CD4-positive, alpha-beta memory T cell (primary cell): ENCODE measurements at regions of chr10 and their contacts with region 1.

Region 1: DNA sequence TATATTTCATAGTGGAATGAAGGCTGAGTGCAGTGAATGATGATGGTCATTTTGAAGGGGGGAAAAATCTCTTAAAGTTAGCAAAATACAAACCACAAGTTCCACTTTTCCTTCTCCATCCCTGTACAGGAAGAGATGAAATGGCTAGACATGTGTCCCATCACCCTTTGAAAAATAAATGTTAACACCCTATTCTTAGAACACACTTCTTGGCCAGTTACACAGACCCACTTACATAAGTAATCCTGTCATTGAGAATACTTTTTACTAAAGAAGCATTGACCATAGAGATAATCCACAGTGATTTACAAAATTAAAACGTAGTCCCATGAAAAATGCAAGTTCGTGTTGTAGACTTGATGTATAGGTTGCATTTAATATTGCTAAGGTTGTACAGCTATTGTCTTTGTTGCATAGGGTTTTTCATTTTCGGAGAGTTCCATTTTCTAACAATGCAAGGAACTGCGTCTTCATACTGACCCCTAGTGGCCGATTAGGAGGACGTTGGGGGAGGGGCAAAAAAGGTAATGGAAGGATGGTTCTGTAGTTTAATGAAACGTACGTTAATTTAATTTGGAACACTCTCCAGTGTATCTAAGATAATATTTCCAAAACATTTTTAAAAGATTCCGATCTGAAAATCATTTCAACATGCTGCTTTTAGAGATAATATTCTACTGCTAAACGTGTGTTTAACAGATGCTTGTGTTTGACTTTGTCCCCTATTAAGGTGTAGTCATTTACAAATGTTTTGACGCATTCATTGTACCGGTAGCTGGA is 60.9 kb downstream of the ARMC3 start:
- DNase-seq: peak; percentile 71 to 79 (median 77)
- H3K4me3 ChIP-seq: no peak overlapping the region
- H3K4me3 Mint-ChIP-seq: no peak overlapping the region
- H3K27ac ChIP-seq: no peak overlapping the region
- H3K27ac Mint-ChIP-seq: peak overlapping the region in 3 of 7 donors; percentile 6 to 68 (median 43)
- H3K4me1 ChIP-seq: peaks cover 13% of the 10 kb centered on the region
- H3K4me1 Mint-ChIP-seq: peaks cover 4 to 10% (median 9%) of the 10 kb centered on the region in 4 donors
- H3K27me3 ChIP-seq: no peaks in the 10 kb centered on the region
- H3K27me3 Mint-ChIP-seq: peaks cover 4 to 5% of the 10 kb centered on the region in 2 donors

Region 2: DNA sequence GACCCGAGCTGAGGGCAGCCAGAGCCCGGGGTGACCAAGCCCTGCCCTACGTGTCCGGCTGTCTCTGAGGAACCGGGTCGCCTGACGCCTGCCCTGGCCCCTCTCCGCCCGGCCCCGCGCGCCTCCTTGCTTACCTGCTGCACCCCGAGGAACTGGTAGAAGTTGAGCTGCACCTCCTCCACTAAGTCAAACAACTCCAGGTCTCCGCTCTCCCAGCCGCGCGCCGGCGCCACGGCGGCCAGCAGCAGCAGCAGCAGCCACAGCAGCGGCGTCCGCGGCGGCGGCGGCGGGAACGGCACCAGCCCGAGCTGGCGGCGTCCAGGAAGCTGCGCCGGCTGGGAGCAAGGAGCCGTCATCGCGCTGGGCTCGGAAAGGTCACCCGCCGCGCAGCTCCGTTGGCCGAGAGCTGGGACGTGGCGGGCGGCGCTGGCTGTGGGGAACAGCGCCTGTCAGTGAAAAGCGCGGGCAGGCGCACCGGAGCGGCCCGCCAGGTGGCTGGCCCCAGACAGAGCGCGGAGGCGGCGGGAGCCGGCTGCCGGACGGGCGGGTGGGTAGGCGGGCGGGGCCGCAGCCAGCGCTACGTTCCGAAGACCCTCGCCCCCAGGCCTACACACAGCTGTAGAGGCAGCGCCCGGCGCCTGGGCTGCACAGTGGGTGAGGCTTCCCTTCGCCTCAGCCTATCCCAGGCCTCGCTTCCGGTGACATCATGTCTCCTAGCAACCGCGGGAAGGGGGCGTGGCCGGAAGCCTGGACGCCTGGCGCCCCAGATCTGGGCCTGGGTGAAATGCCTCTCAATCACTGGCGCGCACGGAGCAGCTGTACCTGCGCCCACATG is 985.5 kb before region 1 on chr10 and contains the start of gene DNAJC1:
- CTCF ChIA-PET with region 1: interaction called, 23 read pairs
- POLR2A ChIA-PET with region 1: no interaction called
- intact Hi-C with region 1: no loop called
- DNase-seq: peak; percentile 96 to 98 (median 96)
- H3K4me3 ChIP-seq: peak within 1 kb of the TSS; percentile 62 to 89
- H3K4me3 Mint-ChIP-seq: peak within 1 kb of the TSS; percentile 94 to 100 (median 98)
- H3K27ac ChIP-seq: peak within 1 kb of the TSS; percentile 84
- H3K27ac Mint-ChIP-seq: peak within 1 kb of the TSS; percentile 91 to 99 (median 97)
- H3K4me1 ChIP-seq: peaks cover 26% of the 10 kb centered on the region
- H3K4me1 Mint-ChIP-seq: peaks cover 23 to 45% (median 34%) of the 10 kb centered on the region in 4 donors
- H3K27me3 ChIP-seq: peaks cover 3% of the 10 kb centered on the region
- H3K27me3 Mint-ChIP-seq: peaks cover 0 to 4% of the 10 kb centered on the region in 2 donors
- total RNA-seq, gene DNAJC1: 15.0 to 16.7 TPM

Region 3: DNA sequence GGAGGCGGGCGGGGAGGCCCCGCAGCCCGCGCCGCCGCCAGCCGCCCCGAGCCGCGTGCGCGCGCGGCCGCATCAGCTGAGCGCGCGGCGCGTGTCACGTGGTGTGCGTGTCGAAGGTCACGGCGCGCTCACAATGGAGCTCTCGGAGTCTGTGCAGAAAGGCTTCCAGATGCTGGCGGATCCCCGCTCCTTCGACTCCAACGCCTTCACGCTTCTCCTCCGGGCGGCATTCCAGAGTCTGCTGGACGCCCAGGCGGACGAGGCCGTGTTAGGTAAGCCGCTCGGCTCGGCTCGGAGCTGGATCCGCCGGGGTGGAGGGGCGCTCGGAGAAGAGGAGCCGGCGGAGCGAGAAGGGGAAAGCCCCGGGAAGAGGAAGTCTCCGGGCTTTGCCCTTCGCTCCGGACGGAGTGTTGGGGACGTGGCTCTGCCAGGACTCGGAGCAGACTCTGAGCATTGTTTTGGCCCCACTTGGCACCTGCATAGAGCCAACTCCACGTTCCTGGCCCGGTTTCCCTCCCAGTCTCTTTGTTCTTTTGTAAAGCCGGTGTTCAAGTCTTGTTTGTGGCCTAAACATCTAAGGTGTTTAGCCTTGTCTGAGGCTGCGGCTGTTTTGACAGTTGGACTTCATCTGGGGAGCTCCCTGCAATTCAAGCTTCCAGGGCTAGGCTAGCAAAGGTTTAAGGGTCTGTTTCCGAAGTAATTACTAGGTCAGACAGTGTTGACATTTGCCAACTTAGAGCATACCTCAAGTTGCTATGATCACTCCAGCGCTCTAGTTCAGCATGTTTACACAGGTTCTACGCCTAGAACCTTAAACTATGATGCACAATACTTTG is 672.3 kb before region 1 on chr10 and contains the start of gene COMMD3:
- CTCF ChIA-PET with region 1: no interaction called
- POLR2A ChIA-PET with region 1: interaction called, 3 read pairs
- intact Hi-C with region 1: loop called (anchors 5 kb)
- DNase-seq: peak; percentile 78 to 86 (median 82)
- H3K4me3 ChIP-seq: peak within 1 kb of the TSS; percentile 77 to 95
- H3K4me3 Mint-ChIP-seq: peak within 1 kb of the TSS; percentile 94 to 99 (median 98)
- H3K27ac ChIP-seq: peak within 1 kb of the TSS; percentile 71
- H3K27ac Mint-ChIP-seq: peak within 1 kb of the TSS; percentile 89 to 98 (median 98)
- H3K4me1 ChIP-seq: peaks cover 37% of the 10 kb centered on the region
- H3K4me1 Mint-ChIP-seq: peaks cover 22 to 50% (median 29%) of the 10 kb centered on the region in 4 donors
- H3K27me3 ChIP-seq: no peaks in the 10 kb centered on the region
- H3K27me3 Mint-ChIP-seq: peaks cover 3 to 4% of the 10 kb centered on the region in 2 donors
- total RNA-seq, gene COMMD3: 67.9 to 68.5 TPM

Region 4: DNA sequence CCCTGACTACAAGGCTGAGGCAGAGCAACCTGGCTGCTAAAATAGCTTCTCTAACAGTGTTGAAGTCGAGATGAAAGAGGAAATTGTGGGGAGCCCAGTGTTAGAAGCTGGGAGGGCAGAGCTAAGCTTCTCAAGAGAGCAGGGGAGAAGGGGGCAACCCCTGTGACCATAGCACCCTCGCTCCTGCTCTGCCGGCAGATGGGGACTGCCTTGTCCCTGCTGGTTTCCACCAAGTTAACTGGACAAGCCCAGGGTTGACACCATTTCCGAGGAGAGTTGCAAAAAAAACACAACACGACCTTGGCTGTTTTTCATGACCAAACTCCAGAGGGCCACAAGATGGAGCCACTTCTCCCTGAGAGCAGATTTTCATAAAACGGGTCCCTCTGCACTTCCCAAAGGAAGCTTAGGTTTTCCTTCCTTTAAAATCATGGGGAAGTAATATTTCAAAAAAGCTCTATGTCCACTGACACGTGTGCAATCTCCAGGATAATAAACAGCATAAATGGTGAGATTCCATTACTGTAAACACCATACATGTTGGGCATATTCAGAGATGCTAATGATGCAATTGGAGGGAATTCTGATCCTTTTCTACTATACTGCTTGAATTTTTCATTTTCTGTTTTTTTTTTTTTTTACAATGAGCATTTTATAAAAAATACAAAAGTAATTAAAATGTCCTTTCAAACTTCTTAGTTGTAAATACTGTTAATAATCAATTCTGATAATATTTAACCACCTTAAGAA is 414.8 kb before region 1 on chr10:
- CTCF ChIA-PET with region 1: interaction called, 62 read pairs
- POLR2A ChIA-PET with region 1: no interaction called
- intact Hi-C with region 1: loop called (anchors 1 kb)
- DNase-seq: peak; percentile 17 to 40 (median 21)
- H3K4me3 ChIP-seq: no peak overlapping the region
- H3K4me3 Mint-ChIP-seq: peak overlapping the region in 3 of 8 donors; percentile 9 to 77 (median 31)
- H3K27ac ChIP-seq: no peak overlapping the region
- H3K27ac Mint-ChIP-seq: peak overlapping the region; percentile 27 to 78 (median 72)
- H3K4me1 ChIP-seq: peaks cover 37% of the 10 kb centered on the region
- H3K4me1 Mint-ChIP-seq: peaks cover 39 to 77% (median 58%) of the 10 kb centered on the region in 4 donors
- H3K27me3 ChIP-seq: no peaks in the 10 kb centered on the region
- H3K27me3 Mint-ChIP-seq: no peaks in the 10 kb centered on the region

Region 5: GRCh38 chr10:22648547-22648961 is 340.2 kb before region 1 on chr10:
- CTCF ChIA-PET with region 1: interaction called, 3 read pairs
- POLR2A ChIA-PET with region 1: no interaction called
- intact Hi-C with region 1: loop called (anchors 5 kb)
- DNase-seq: peak in 1 of 5 donors; percentile 27
- H3K4me3 ChIP-seq: peak overlapping the region in 1 of 2 donors; percentile 44
- H3K4me3 Mint-ChIP-seq: peak overlapping the region; percentile 67 to 91 (median 78)
- H3K27ac ChIP-seq: peak overlapping the region; percentile 61
- H3K27ac Mint-ChIP-seq: peak overlapping the region; percentile 85 to 96 (median 95)
- H3K4me1 ChIP-seq: peaks cover 100% of the 10 kb centered on the region
- H3K4me1 Mint-ChIP-seq: peaks cover 82 to 96% (median 90%) of the 10 kb centered on the region in 4 donors
- H3K27me3 ChIP-seq: no peaks in the 10 kb centered on the region
- H3K27me3 Mint-ChIP-seq: no peaks in the 10 kb centered on the region

Region 6: GRCh38 chr10:23005150-23005549 is 16.4 kb after region 1 on chr10:
- CTCF ChIA-PET with region 1: no interaction called
- POLR2A ChIA-PET with region 1: no interaction called
- intact Hi-C with region 1: no loop called
- DNase-seq: no peak
- H3K4me3 ChIP-seq: no peak overlapping the region
- H3K4me3 Mint-ChIP-seq: no peak overlapping the region
- H3K27ac ChIP-seq: no peak overlapping the region
- H3K27ac Mint-ChIP-seq: no peak overlapping the region
- H3K4me1 ChIP-seq: no peaks in the 10 kb centered on the region
- H3K4me1 Mint-ChIP-seq: no peaks in the 10 kb centered on the region
- H3K27me3 ChIP-seq: no peaks in the 10 kb centered on the region
- H3K27me3 Mint-ChIP-seq: peaks cover 18 to 24% of the 10 kb centered on the region in 2 donors